IMR-90 (cell line): ENCODE measurements at regions of chr19 and their contacts with region 1.

Region 1: DNA sequence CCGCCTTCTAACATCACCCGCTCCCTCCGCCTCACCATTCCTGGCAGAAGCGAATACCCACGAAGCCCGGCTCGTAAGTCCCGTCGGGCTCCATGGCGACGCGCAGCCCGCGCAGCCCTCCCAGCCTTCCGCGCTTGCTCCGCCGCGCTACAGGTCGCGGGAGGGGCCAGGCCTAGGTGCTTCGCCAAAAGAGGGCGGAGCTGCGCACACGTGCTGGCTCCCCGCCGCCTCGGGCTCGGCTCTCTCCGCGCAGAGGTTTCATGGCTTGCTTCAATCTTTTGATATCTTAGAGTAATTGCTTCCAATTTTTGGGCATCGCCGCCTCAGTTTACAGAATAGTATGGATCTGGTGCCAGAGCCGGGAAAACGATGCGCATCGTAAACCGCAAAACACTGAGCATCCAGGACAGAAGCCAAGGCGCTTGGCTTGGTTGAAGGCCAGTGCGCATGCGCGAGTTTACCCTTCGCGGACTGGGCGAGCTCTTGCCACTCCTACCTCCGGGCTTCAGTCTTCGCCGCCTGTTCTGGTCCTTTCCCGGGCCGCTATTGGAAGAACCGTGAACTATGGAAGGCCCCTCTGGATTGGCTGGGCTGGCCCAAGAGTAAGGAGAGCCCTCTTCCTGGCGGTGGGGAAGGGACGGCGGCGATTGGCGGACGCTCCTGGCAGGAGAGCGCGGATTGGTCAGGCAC is at the start of gene POLR2I:
- DNase-seq: peak; percentile 100
- ATAC-seq: peak; percentile 93
- H3K4me3 ChIP-seq: peak within 1 kb of the TSS; percentile 63
- H3K27ac ChIP-seq: peak within 1 kb of the TSS; percentile 71
- H3K4me1 ChIP-seq: peaks cover 7% of the 10 kb centered on the region
- H3K27me3 ChIP-seq: no peaks in the 10 kb centered on the region
- CTCF ChIP-seq: no peak
- POLR2A ChIP-seq: peak; percentile 43
- RAD21 ChIP-seq: no peak
- total RNA-seq, gene POLR2I: 35.8 and 48.3 TPM in 2 replicates

Region 2: GRCh38 chr19:36060430-36060829 is 54.5 kb before region 1 on chr19:
- CTCF ChIA-PET with region 1: interaction called, 6 read pairs
- POLR2A ChIA-PET with region 1: no interaction called
- dilution Hi-C with region 1: no loop called
- in situ Hi-C with region 1: no loop called
- intact Hi-C with region 1: loop called (anchors 2 kb)
- DNase-seq: peak; percentile 63
- ATAC-seq: peak; percentile 97
- H3K4me3 ChIP-seq: no peak overlapping the region
- H3K27ac ChIP-seq: no peak overlapping the region
- H3K4me1 ChIP-seq: no peaks in the 10 kb centered on the region
- H3K27me3 ChIP-seq: no peaks in the 10 kb centered on the region
- CTCF ChIP-seq: peak; percentile 78
- POLR2A ChIP-seq: no peak
- RAD21 ChIP-seq: peak; percentile 83

Region 3: GRCh38 chr19:36132489-36132891 is 17.6 kb after region 1 on chr19:
- CTCF ChIA-PET with region 1: interaction called, 14 read pairs
- POLR2A ChIA-PET with region 1: no interaction called
- dilution Hi-C with region 1: no loop called
- in situ Hi-C with region 1: no loop called
- intact Hi-C with region 1: no loop called
- DNase-seq: peak; percentile 39
- ATAC-seq: no peak
- H3K4me3 ChIP-seq: no peak overlapping the region
- H3K27ac ChIP-seq: no peak overlapping the region
- H3K4me1 ChIP-seq: peaks cover 6% of the 10 kb centered on the region
- H3K27me3 ChIP-seq: no peaks in the 10 kb centered on the region
- CTCF ChIP-seq: no peak
- POLR2A ChIP-seq: no peak
- RAD21 ChIP-seq: no peak

Region 4: DNA sequence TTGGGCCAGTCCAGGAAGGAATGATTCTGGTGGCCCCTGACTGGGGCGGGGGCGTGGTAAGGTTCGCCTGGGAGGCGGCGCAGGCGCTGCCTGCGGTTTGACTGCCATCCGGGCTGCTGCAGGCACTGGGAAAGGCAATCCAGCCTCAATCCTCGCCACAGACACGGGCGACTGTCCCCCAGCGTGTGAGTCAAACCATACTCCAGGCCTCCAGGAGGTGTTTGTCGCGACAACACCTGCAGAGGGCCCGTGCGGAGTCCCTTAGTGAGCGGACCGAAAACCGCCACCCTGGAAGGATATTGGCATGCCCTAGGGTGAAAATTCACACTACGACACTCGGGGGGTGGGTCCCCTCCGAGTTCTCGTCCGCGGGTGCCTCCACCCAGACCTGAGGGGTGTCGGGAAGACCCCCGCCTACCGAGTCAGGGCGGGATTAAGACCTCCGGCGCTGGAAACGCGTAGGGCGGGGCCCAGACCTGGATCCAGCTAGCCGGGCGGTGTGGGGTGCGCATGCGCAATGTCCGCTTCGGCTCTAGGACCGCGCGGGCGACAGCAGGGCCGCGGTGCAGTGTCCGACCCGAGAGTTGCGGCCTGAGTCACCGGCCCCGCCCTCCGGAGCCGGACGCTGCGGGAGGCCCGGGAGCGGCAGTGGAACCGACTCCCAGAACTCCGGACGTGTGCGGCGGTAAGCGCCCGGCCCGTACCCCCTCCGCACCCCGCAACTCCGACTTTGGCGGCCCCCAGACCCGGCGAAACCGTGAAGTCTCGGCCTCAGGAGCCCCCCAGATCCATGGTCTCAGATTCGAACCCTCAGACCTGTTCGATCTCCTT is 24.8 kb after region 1 on chr19 and contains the start of gene CAPNS1:
- CTCF ChIA-PET with region 1: no interaction called
- POLR2A ChIA-PET with region 1: interaction called, 17 read pairs
- dilution Hi-C with region 1: no loop called
- in situ Hi-C with region 1: no loop called
- intact Hi-C with region 1: loop called (anchors 2 kb)
- DNase-seq: peak; percentile 93
- ATAC-seq: peak; percentile 84
- H3K4me3 ChIP-seq: peak within 1 kb of the TSS; percentile 96
- H3K27ac ChIP-seq: peak within 1 kb of the TSS; percentile 95
- H3K4me1 ChIP-seq: peaks cover 10% of the 10 kb centered on the region
- H3K27me3 ChIP-seq: no peaks in the 10 kb centered on the region
- CTCF ChIP-seq: no peak
- POLR2A ChIP-seq: peak; percentile 92
- RAD21 ChIP-seq: no peak
- total RNA-seq, gene CAPNS1: 436 and 504 TPM in 2 replicates